Right ventricle myocardium inferior (tissue), 1 donor: ENCODE measurements at regions of chr18 and their contacts with region 1.

Region 1: GRCh38 chr18:12657684-12658425 is at the start of gene SPIRE1:
- DNase-seq: peak; percentile 87
- ATAC-seq: peak; percentile 92
- total RNA-seq, gene SPIRE1: 43.7 TPM

Region 2: DNA sequence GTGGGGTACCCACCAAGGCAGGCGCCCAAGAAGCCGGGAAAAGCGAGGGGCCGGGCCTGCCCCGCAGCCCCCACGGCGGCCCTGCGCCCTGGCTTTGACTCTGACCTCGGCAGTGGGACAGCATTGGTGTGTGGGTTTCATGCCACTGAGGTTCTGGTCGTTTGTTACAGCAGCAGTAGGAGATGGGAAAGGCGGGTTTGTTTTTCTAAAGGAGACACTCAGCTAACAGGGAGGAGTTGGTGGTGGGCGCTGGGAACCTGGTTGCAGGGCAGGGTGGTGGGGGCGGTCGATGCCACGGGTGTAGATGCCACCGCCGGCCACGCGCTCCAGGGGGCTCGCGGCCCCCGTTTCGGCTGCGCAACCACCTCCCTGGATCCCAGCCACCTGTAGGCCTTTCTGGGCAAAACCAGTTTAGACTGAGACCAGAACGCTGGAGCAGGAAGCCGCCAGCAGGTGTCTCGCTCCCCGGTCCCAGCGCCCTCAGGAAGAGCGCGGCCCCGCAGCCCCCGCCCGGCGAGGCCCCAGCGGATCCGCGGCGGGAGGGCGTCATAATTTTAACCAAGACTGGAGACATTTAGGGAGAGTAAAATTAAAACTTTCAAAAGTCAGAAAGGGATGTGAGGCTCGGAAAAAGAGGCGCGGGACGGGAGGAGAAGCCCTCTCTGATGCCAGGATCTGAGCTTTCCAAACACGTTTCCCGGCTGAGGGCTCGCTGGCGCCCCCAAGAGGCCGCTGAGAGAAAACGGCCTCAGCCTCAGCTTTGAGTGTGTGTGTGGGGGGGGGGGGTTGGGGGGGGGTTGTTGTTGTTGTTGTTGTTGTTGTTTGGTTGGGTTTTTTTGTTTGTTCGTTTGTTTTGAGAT is 386.2 kb before region 1 on chr18:
- intact Hi-C with region 1: loop called (anchors 10 kb)
- DNase-seq: peak; percentile 83
- ATAC-seq: peak; percentile 93

Region 3: GRCh38 chr18:12391618-12392165 is 266.2 kb before region 1 on chr18:
- intact Hi-C with region 1: loop called (anchors 1 kb)
- DNase-seq: no peak
- ATAC-seq: peak; percentile 90

Region 4: GRCh38 chr18:12408247-12408869 is 249.5 kb before region 1 on chr18:
- intact Hi-C with region 1: loop called (anchors 5 kb)
- DNase-seq: no peak
- ATAC-seq: peak; percentile 24

Region 5: DNA sequence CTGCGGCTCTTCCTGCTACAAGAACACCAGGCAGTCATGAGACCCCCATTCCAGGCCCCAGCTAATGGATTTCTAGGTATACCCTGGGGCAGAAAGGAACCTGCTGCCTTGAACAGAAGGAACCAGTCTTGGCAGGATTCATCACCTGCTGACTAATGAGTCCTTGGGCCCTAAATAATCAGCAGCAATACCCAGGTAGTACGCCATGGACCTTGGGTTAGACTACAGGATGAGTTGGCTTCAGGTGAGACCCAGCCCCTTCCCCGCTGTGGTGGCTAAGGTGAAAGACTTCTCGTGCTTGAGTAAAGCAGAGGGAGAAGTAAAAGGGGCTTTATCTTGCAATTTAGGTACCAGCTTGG is 105.0 kb before region 1 on chr18:
- intact Hi-C with region 1: loop called (anchors 5 kb)
- DNase-seq: no peak
- ATAC-seq: no peak

Region 6: DNA sequence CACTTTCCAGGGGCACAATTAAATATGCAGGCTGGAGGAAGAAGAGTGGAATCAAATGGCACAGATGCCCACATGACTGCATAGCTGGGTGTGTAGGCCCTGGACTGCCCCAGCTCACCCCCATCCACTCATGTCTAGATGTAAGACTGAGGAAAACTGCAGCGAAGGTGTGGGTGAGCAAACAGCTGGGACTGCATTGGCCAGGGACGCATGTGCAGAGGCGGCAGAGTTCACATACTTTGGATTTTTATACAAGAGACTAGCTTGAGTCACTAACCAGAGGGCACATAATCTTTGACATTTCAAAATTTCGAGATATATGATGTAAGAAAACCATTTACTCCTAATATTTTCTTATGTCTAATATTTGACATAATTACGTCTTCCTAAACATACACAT is 60.1 kb before region 1 on chr18:
- intact Hi-C with region 1: loop called (anchors 5 kb)
- DNase-seq: no peak
- ATAC-seq: peak; percentile 82

Region 7: DNA sequence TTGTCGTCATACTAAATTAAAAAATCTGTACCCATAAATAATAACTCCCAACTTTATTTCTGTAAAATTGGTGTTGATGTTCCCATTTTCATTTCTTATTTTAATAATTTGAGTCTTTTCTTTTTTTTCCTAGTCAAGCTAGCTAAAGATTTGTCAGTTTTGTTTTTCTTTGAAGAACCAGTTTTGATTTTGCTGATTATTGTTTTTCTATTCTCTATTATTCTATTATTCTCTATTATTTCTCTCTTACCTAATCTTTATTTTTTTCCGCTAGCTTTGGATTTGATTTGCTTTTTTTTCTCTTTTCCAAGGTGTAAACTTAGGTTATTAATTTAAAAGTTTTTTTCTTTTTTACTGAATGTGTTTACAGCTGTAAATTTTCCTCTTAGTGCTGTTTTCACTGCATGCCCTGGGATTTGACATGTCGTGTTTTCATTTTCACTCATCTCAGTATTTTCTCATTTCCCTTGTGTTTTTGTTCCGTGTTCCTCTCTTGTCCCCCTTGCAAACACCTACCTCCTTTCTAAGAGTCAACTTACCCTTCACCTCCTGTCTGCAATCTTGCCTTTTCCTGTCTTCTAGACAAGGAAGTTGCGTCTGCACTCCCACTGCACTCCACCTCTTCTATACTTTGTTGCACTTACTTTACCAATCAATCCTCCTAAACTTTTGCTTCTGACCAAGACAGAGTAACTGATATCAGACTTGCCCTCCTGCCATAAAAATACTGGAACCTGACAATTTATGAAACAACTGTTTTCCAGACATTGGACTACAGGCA is 63.8 kb after region 1 on chr18:
- intact Hi-C with region 1: no loop called
- DNase-seq: no peak
- ATAC-seq: no peak